PC-9 (cell line): ENCODE measurements at regions of chr5 and their contacts with region 1.

Region 1: GRCh38 chr5:154587123-154588026 is 109.3 kb upstream of the HAND1 start:
- DNase-seq: no peak
- H3K4me3 ChIP-seq: no peak overlapping the region
- H3K27ac ChIP-seq: no peak overlapping the region
- H3K4me1 ChIP-seq: peaks cover 26% of the 10 kb centered on the region
- H3K27me3 ChIP-seq: no peaks in the 10 kb centered on the region
- CTCF ChIP-seq: no peak

Region 2: DNA sequence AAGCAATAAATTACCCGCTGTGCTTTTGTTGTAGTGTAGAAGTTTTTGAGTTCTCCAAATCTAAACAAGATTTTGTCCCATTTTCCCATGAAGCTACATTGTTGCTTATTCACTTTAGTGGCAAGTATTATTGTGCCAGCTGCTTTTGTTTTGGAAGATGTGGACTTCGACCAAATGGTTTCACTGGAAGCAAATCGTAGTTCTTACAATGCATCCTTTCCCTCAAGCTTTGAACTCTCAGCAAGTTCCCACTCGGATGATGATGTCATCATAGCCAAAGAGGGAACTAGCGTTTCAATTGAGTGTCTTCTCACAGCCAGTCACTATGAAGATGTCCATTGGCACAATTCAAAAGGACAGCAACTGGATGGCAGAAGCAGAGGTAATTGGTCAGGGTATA is 537.7 kb before region 1 on chr5:
- CTCF ChIA-PET with region 1: interaction called, 17 read pairs
- POLR2A ChIA-PET with region 1: no interaction called
- intact Hi-C with region 1: no loop called
- DNase-seq: no peak
- H3K4me3 ChIP-seq: no peak overlapping the region
- H3K27ac ChIP-seq: no peak overlapping the region
- H3K4me1 ChIP-seq: no peaks in the 10 kb centered on the region
- H3K27me3 ChIP-seq: no peaks in the 10 kb centered on the region
- CTCF ChIP-seq: no peak